AG04450 (cell line): ENCODE measurements at regions of chr3 and their contacts with region 1.

Region 1: GRCh38 chr3:50235716-50236496 is at the start of gene GNAI2:
- DNase-seq: peak; percentile 94
- H3K4me3 ChIP-seq: peak within 1 kb of the TSS; percentile 95
- H3K27ac ChIP-seq: peak within 1 kb of the TSS; percentile 47
- H3K27me3 ChIP-seq: no peaks in the 10 kb centered on the region
- CTCF ChIP-seq: no peak
- polyA plus RNA-seq, gene GNAI2: 603 and 661 TPM in 2 replicates

Region 2: DNA sequence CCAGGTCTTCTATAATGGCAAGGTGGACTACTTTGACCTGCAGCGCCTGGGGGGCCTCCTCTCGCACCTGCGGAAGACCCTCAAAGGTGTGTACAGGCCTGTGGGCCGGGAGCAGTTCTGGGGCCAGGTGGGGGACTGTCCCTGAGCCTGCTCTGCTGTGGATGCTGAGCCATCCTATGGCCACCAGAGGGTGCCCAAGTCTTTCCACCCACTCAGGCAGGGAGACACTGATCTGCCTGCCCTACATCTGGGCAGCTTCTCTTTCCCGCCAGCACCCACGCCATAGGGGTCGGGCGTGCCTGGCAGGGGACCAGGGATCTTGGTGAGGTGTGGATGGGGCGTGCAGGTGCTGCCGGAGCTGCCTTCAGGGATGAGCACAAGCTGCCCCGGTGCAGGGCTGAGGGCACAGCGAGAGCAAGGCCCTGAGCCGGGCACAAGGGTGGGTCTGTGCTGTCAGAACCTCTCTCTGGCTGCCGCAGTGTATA is 532.4 kb before region 1 on chr3:
- CTCF ChIA-PET with region 1: no interaction called
- POLR2A ChIA-PET with region 1: no interaction called
- DNase-seq: peak; percentile 27
- H3K4me3 ChIP-seq: no peak overlapping the region
- H3K27ac ChIP-seq: no peak overlapping the region
- H3K27me3 ChIP-seq: no peaks in the 10 kb centered on the region
- CTCF ChIP-seq: peak; percentile 85

Region 3: DNA sequence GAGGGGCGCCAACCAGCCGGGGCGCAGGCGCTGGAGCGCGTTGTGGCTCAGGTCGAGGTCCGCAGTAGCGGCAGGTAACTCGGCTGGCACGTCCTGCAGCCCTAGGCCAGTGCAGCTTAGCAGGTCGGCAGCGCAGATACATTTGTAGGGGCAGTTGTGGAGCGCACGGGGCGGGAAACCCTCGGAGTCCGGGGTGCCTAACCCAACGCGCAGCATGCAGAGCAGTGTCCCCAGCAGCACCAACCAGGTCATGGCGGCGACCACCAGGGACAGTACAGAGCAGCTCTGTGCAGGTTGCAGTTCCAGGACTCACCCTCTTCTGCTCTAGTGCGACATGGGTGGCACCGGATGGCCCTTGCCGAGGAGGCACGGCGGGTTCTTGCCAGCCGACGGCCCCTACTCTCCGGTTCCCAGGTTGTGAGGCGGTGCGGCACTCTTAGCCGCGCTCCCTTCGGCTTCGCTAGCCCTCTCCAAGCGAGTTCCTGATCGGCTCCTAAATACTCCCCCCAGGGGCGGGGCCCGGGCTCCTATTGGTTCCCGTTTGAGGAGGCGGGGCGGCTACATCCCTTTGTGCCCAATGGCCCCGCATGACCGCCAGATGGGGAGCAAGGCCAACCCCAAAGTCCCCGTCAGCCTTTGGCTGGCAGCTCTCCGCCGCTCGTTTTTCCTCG is 516.6 kb before region 1 on chr3 and contains the start of gene AMIGO3:
- CTCF ChIA-PET with region 1: no interaction called
- POLR2A ChIA-PET with region 1: no interaction called
- DNase-seq: peak; percentile 73
- H3K4me3 ChIP-seq: peak within 1 kb of the TSS; percentile 69
- H3K27ac ChIP-seq: peak within 1 kb of the TSS; percentile 47
- H3K27me3 ChIP-seq: no peaks in the 10 kb centered on the region
- CTCF ChIP-seq: peak; percentile 36; the same call in 1 of the 2 replicates
- polyA plus RNA-seq, gene AMIGO3: 0.11 TPM in 1 of 2 replicates, not detected in the other

Region 4: GRCh38 chr3:50121416-50122032 is 114.4 kb before region 1 on chr3:
- CTCF ChIA-PET with region 1: interaction called, 10 read pairs
- POLR2A ChIA-PET with region 1: no interaction called
- DNase-seq: peak; percentile 66
- H3K4me3 ChIP-seq: no peak overlapping the region
- H3K27ac ChIP-seq: no peak overlapping the region
- H3K27me3 ChIP-seq: no peaks in the 10 kb centered on the region
- CTCF ChIP-seq: peak; percentile 79

Region 5: GRCh38 chr3:50138266-50139200 is 97.4 kb before region 1 on chr3:
- CTCF ChIA-PET with region 1: no interaction called
- POLR2A ChIA-PET with region 1: no interaction called
- DNase-seq: no peak
- H3K4me3 ChIP-seq: no peak overlapping the region
- H3K27ac ChIP-seq: no peak overlapping the region
- H3K27me3 ChIP-seq: peaks cover 8% of the 10 kb centered on the region
- CTCF ChIP-seq: no peak

Region 6: GRCh38 chr3:50245831-50246516 is 10.1 kb after region 1 on chr3:
- CTCF ChIA-PET with region 1: interaction called, 25 read pairs
- POLR2A ChIA-PET with region 1: interaction called, 24 read pairs
- DNase-seq: no peak
- H3K4me3 ChIP-seq: peak overlapping the region; percentile 49
- H3K27ac ChIP-seq: peak overlapping the region; percentile 91
- H3K27me3 ChIP-seq: no peaks in the 10 kb centered on the region
- CTCF ChIP-seq: peak; percentile 97

Region 7: DNA sequence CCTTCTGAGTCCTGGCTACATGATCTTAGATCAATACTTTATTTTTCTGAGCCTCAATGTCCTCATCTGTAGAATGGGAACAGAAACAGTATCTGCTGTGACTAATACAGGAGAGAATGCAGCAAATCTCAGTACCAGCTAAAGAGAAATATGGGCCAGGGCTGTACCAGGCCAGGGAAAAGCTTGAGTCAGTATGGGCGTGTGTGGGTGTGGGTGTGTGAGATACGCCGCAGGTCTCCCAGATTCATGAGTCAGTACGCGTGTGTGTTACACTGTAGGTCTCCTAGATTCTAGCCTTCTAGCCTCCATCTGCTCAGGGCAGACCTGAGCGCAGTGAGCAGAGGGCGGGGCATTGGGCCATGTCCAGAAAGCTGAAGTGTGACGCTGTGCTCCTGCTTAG is 15.3 kb after region 1 on chr3:
- CTCF ChIA-PET with region 1: interaction called, 25 read pairs
- POLR2A ChIA-PET with region 1: interaction called, 24 read pairs
- DNase-seq: no peak
- H3K4me3 ChIP-seq: no peak overlapping the region
- H3K27ac ChIP-seq: peak overlapping the region; percentile 47
- H3K27me3 ChIP-seq: no peaks in the 10 kb centered on the region
- CTCF ChIP-seq: no peak